ENCODE measurements at regions of chr20 and their contacts with region 1.

Region 1: DNA sequence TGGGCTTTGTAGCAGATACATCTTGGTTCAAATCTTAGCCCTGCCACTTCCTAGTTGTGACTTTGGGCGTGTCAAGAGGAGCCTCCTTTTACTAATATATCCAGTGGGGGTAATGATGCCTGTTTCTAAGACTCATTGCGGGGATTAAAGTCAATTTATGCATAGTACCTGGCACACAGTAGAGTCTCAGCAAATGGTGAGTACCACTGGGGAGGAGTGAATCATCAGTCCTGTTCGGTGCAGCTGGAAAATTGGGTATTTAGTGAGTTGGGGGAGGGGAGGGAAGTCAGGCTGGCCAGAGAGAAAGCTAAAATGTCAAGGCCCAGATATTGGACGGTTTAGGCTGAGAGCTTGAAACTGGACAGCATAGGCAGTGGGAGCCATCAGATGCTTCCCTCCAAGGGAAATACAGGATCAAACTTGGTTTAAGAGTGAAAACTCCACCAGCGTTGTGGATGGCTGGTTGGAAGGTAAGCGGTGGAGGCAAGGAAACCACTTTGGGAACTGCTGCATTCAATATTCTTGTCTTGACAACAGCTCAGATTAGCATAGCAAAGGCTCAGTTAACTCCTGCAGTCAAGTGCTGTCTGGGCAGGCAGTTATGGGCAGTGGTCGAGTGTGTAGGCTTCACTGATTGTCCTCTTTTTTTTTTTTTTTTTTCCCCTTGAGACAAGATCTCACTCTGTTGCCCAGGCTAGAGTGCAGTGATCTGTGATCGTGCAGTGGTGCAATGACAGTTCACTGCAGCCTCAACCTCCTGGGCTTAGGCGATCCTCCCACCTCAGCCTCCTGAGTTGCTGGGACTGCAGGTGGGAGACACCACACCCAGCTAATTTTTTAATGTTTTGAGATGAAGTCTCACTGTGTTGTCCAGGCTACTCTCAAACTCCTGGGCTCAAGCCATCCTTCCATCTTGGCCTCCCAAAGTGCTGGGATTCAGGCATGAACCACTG is 12.9 kb downstream of the PPP1R16B start:
- DNase-seq: no peak
- ATAC-seq: peak; percentile 8; the same call in 2 of the 3 replicates
- H3K4me3 ChIP-seq: no peak overlapping the region
- H3K27ac ChIP-seq: no peak overlapping the region
- H3K4me1 ChIP-seq: peaks cover 18% of the 10 kb centered on the region
- H3K27me3 ChIP-seq: no peaks in the 10 kb centered on the region
- CTCF ChIP-seq: no peak
- EP300 ChIP-seq: no peak
- POLR2A ChIP-seq: no peak
- RAD21 ChIP-seq: no peak

Region 2: GRCh38 chr20:38805502-38805957 is 12.9 kb before region 1 on chr20 and contains the start of gene PPP1R16B:
- CTCF ChIA-PET with region 1: interaction called, 7 read pairs
- POLR2A ChIA-PET with region 1: interaction called, 8 read pairs
- RAD21 ChIA-PET with region 1: interaction called, 10 read pairs
- SMC1A ChIA-PET with region 1: interaction called, 8 read pairs
- in situ Hi-C with region 1: no loop called
- intact Hi-C with region 1: no loop called
- DNase-seq: no peak
- ATAC-seq: peak; percentile 78
- H3K4me3 ChIP-seq: peak within 1 kb of the TSS; percentile 87
- H3K27ac ChIP-seq: peak within 1 kb of the TSS; percentile 84
- H3K4me1 ChIP-seq: peaks cover 31% of the 10 kb centered on the region
- H3K27me3 ChIP-seq: no peaks in the 10 kb centered on the region
- CTCF ChIP-seq: no peak
- EP300 ChIP-seq: no peak
- POLR2A ChIP-seq: peak; percentile 96
- RAD21 ChIP-seq: no peak
- polyA plus RNA-seq, gene PPP1R16B: 13.4 to 14.2 TPM

Region 3: DNA sequence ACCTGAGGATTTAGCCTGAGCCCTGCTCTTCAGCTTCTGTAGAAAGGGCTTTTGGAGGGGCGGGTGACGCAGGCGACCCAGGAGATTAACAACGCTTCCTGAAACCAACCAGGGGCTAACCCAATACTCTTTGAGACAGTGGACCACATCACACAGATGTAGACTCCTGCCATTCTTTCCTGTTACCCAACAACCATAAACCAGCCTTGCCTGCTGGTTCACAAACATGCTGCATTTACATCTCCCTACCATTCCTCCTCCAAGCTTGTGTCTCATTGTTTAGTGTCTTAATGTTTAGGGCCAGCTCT is 15.4 kb after region 1 on chr20:
- CTCF ChIA-PET with region 1: interaction called, 14 read pairs
- POLR2A ChIA-PET with region 1: interaction called, 9 read pairs
- RAD21 ChIA-PET with region 1: interaction called, 4 read pairs
- SMC1A ChIA-PET with region 1: interaction called, 187 read pairs
- in situ Hi-C with region 1: no loop called
- intact Hi-C with region 1: no loop called
- DNase-seq: no peak
- ATAC-seq: peak; percentile 51
- H3K4me3 ChIP-seq: no peak overlapping the region
- H3K27ac ChIP-seq: peak overlapping the region; percentile 77
- H3K4me1 ChIP-seq: peaks cover 54% of the 10 kb centered on the region
- H3K27me3 ChIP-seq: no peaks in the 10 kb centered on the region
- CTCF ChIP-seq: no peak
- EP300 ChIP-seq: no peak
- POLR2A ChIP-seq: no peak
- RAD21 ChIP-seq: no peak

Region 4: DNA sequence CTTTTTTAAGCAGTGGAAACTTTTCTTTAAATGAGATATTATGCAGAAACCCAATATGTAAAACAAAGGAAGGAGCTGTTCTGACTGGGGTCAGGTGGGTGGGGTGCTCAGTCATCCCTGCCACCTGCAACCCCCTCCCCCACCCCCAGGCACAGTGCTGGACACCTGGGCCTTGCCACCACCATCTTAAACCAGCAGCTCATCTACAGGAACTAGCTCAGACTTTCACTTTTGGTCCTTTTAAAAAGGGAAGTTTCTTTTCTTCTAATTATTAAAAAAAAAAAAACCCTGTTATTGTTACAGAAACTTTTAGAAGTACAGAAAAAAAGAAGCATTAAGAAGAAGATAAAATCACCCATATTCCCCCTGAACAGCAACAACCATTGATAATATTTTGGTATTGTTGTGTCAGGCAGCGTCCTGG is 24.2 kb after region 1 on chr20:
- CTCF ChIA-PET with region 1: interaction called, 3 read pairs
- POLR2A ChIA-PET with region 1: interaction called, 4 read pairs
- RAD21 ChIA-PET with region 1: interaction called, 14 read pairs
- SMC1A ChIA-PET with region 1: interaction called, 187 read pairs
- in situ Hi-C with region 1: no loop called
- intact Hi-C with region 1: no loop called
- DNase-seq: peak; percentile 91
- ATAC-seq: peak; percentile 99
- H3K4me3 ChIP-seq: peak overlapping the region; percentile 8; the same call in 1 of the 2 replicates
- H3K27ac ChIP-seq: peak overlapping the region; percentile 96
- H3K4me1 ChIP-seq: peaks cover 59% of the 10 kb centered on the region
- H3K27me3 ChIP-seq: no peaks in the 10 kb centered on the region
- CTCF ChIP-seq: no peak
- EP300 ChIP-seq: peak; percentile 67 to 95
- POLR2A ChIP-seq: no peak
- RAD21 ChIP-seq: peak; percentile 29; the same call in 1 of the 2 replicates

Measured in GM12878 (cell line).